Spleen (tissue), 13 donors: ENCODE measurements at regions of chr1 and their contacts with region 1.

Region 1: GRCh38 chr1:175373786-175374623 is 181.4 kb upstream of the KIAA0040 start:
- DNase-seq: no peak
- H3K4me3 ChIP-seq: no peak overlapping the region
- H3K27ac ChIP-seq: no peak overlapping the region
- H3K4me1 ChIP-seq: no peaks in the 10 kb centered on the region
- H3K27me3 ChIP-seq: peaks cover 0 to 4% (median 0%) of the 10 kb centered on the region in 7 donors
- CTCF ChIP-seq: peak in 9 of 11 experiments; percentile 7 to 62 (median 52)
- POLR2A ChIP-seq: no peak

Region 2: GRCh38 chr1:174850726-174851125 is 523.3 kb before region 1 on chr1:
- intact Hi-C with region 1: no loop called
- DNase-seq: no peak
- H3K4me3 ChIP-seq: no peak overlapping the region
- H3K27ac ChIP-seq: no peak overlapping the region
- H3K4me1 ChIP-seq: no peaks in the 10 kb centered on the region
- H3K27me3 ChIP-seq: no peaks in the 10 kb centered on the region
- CTCF ChIP-seq: no peak
- POLR2A ChIP-seq: no peak

Region 3: GRCh38 chr1:175690298-175690697 is 316.3 kb after region 1 on chr1:
- intact Hi-C with region 1: no loop called
- DNase-seq: no peak
- H3K4me3 ChIP-seq: no peak overlapping the region
- H3K27ac ChIP-seq: no peak overlapping the region
- H3K4me1 ChIP-seq: no peaks in the 10 kb centered on the region
- H3K27me3 ChIP-seq: peaks cover 0 to 20% (median 0%) of the 10 kb centered on the region in 7 donors
- CTCF ChIP-seq: no peak
- POLR2A ChIP-seq: no peak

Region 4: GRCh38 chr1:176073524-176074157 is 699.6 kb after region 1 on chr1:
- intact Hi-C with region 1: loop called (anchors 10 kb)
- DNase-seq: no peak
- H3K4me3 ChIP-seq: no peak overlapping the region
- H3K27ac ChIP-seq: no peak overlapping the region
- H3K4me1 ChIP-seq: peaks cover 0 to 8% (median 0%) of the 10 kb centered on the region in 6 donors
- H3K27me3 ChIP-seq: no peaks in the 10 kb centered on the region
- CTCF ChIP-seq: peak in 10 of 11 experiments; percentile 17 to 74 (median 61)
- POLR2A ChIP-seq: no peak

Region 5: GRCh38 chr1:176691251-176692228 is 1317.5 kb after region 1 on chr1:
- intact Hi-C with region 1: loop called (anchors 10 kb)
- DNase-seq: no peak
- H3K4me3 ChIP-seq: no peak overlapping the region
- H3K27ac ChIP-seq: no peak overlapping the region
- H3K4me1 ChIP-seq: no peaks in the 10 kb centered on the region
- H3K27me3 ChIP-seq: no peaks in the 10 kb centered on the region
- CTCF ChIP-seq: peak in 7 of 11 experiments; percentile 33 to 70 (median 45)
- POLR2A ChIP-seq: no peak